ENCODE measurements at regions of chr3 and their contacts with region 1.

Region 1: DNA sequence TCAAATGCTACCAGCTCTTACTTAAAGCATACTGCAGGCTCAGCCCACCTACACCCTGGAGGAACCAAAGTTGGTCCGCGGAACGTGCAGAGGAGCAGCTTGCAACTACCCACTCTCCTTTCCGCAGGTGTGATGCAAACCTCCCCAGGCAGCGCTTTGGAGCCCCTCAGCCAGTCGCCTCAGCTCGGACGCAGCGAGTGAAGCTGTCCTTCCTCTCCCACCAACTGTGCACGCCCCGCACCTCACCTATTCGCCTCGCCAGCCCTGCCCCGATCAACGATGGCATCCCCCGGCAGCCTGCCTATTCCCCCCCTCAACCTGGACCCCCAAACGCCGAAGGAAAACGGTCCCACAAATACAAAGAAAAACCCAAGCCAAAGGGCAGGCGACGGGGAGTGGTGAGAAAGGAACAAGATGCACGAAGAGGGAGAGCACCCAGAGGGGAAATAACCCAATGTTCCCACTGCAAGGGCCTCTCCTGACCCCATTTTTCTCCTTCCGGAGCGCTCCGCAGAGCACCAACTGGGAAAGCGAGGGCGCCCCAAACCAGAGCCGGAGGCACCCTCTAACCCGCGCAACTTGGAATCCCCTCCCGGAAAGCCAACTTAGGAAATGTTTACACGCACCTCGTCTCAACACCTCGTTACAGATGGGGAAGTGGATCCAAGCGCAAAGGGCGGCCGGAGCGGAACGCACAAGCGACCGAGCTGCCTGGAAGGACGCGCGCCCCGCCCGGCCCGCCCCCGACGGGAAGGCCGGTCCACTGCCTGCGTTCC is 665 bp downstream of the GLB1 start:
- DNase-seq: peak; percentile 63 to 73
- ATAC-seq: peak; percentile 52 to 71 (median 55)
- H3K4me3 ChIP-seq: peak overlapping the region; percentile 99
- H3K27ac ChIP-seq: peak overlapping the region; percentile 97
- H3K4me1 ChIP-seq: peaks cover 13% of the 10 kb centered on the region
- H3K27me3 ChIP-seq: no peaks in the 10 kb centered on the region
- CTCF ChIP-seq: no peak

Region 2: GRCh38 chr3:32614956-32615355 is 481.3 kb before region 1 on chr3:
- intact Hi-C with region 1: no loop called
- DNase-seq: no peak
- ATAC-seq: no peak
- H3K4me3 ChIP-seq: no peak overlapping the region
- H3K27ac ChIP-seq: no peak overlapping the region
- H3K4me1 ChIP-seq: no peaks in the 10 kb centered on the region
- H3K27me3 ChIP-seq: no peaks in the 10 kb centered on the region
- CTCF ChIP-seq: no peak

Region 3: GRCh38 chr3:32733631-32734229 is 362.6 kb before region 1 on chr3:
- intact Hi-C with region 1: no loop called
- DNase-seq: no peak
- ATAC-seq: no peak
- H3K4me3 ChIP-seq: no peak overlapping the region
- H3K27ac ChIP-seq: no peak overlapping the region
- H3K4me1 ChIP-seq: no peaks in the 10 kb centered on the region
- H3K27me3 ChIP-seq: no peaks in the 10 kb centered on the region
- CTCF ChIP-seq: peak; percentile 46

Region 4: DNA sequence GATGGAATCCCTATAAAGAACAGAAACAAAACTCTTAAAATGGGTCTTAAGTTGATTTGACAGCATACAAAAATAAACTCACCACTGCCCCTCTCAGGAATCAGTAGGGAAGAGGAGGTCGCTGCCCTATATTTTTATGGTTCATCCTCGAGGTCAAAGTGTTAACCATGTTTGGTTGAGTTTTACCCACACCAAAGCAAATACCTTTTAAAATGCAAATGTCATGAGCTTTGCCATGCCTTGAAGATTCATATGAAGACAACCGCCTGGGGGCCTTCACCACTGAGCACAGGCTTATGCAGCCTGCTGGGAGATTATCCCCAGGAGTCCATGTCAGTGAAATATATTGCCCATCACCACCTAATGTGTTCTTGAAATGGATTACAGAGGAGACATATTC is 65.5 kb before region 1 on chr3:
- intact Hi-C with region 1: no loop called
- DNase-seq: no peak
- ATAC-seq: no peak
- H3K4me3 ChIP-seq: no peak overlapping the region
- H3K27ac ChIP-seq: no peak overlapping the region
- H3K4me1 ChIP-seq: no peaks in the 10 kb centered on the region
- H3K27me3 ChIP-seq: no peaks in the 10 kb centered on the region
- CTCF ChIP-seq: no peak

Region 5: GRCh38 chr3:33113772-33114621 is 17.7 kb after region 1 on chr3 and contains the start of gene CRTAP:
- intact Hi-C with region 1: loop called in 1 of 2 experiments (anchors 1 kb)
- DNase-seq: peak; percentile 97
- ATAC-seq: peak; percentile 90 to 94 (median 92)
- H3K4me3 ChIP-seq: peak within 1 kb of the TSS; percentile 89
- H3K27ac ChIP-seq: peak within 1 kb of the TSS; percentile 92
- H3K4me1 ChIP-seq: peaks cover 7% of the 10 kb centered on the region
- H3K27me3 ChIP-seq: no peaks in the 10 kb centered on the region
- CTCF ChIP-seq: no peak
- total RNA-seq, gene CRTAP: 56.3 to 80.8 (median 76.3) TPM